Ascending aorta (tissue), 2 donors: ENCODE measurements at regions of chr3 and their contacts with region 1.

Region 1: GRCh38 chr3:21894459-21895340 is 143.7 kb upstream of the ZNF385D start:
- DNase-seq: no peak
- H3K4me3 ChIP-seq: no peak overlapping the region
- H3K27ac ChIP-seq: no peak overlapping the region
- H3K4me1 ChIP-seq: peaks cover 0 to 3% of the 10 kb centered on the region in 2 donors
- H3K27me3 ChIP-seq: no peaks in the 10 kb centered on the region
- CTCF ChIP-seq: peak in 2 of 3 experiments; percentile 65 to 75

Region 2: DNA sequence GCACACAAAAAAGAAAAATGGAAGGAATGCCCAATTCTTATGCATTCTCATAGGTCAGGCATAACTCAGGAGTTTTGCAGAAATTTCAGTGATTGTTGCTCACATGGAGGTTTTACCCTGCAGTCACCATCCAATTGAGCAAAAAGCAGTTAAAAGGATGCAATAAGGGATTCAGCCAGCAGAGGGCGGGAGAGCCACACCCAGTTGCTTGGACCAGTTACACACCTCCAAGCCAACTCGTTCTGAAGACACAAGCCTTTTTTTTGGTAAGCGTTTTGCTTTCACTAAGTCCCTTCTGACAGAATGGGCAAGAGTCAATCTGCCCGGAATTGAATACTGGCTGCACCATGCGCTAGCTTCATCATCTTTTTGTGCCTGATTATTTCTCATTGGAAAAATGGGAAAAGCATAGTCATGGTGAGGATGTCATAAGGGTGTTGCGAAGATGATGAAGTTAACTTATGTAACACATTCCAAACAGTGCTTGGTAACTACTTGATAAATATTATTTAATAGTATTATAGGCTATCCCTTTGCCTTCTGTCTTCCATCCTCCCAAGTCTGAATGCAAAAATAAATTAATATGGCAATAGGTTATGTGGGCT is 1554.3 kb before region 1 on chr3:
- intact Hi-C with region 1: loop called (anchors 10 kb)
- DNase-seq: peak; percentile 9 to 79
- H3K4me3 ChIP-seq: peak overlapping the region in 1 of 2 donors; percentile 12
- H3K27ac ChIP-seq: no peak overlapping the region
- H3K4me1 ChIP-seq: no peaks in the 10 kb centered on the region
- H3K27me3 ChIP-seq: no peaks in the 10 kb centered on the region
- CTCF ChIP-seq: peak; percentile 58 to 93 (median 89)

Region 3: GRCh38 chr3:20511863-20512505 is 1382.7 kb before region 1 on chr3:
- intact Hi-C with region 1: loop called (anchors 5 kb)
- DNase-seq: no peak
- H3K4me3 ChIP-seq: no peak overlapping the region
- H3K27ac ChIP-seq: no peak overlapping the region
- H3K4me1 ChIP-seq: no peaks in the 10 kb centered on the region
- H3K27me3 ChIP-seq: no peaks in the 10 kb centered on the region
- CTCF ChIP-seq: peak; percentile 40 to 64 (median 50)

Region 4: GRCh38 chr3:21294768-21295167 is 599.9 kb before region 1 on chr3:
- intact Hi-C with region 1: no loop called
- DNase-seq: no peak
- H3K4me3 ChIP-seq: no peak overlapping the region
- H3K27ac ChIP-seq: no peak overlapping the region
- H3K4me1 ChIP-seq: no peaks in the 10 kb centered on the region
- H3K27me3 ChIP-seq: no peaks in the 10 kb centered on the region
- CTCF ChIP-seq: no peak

Region 5: DNA sequence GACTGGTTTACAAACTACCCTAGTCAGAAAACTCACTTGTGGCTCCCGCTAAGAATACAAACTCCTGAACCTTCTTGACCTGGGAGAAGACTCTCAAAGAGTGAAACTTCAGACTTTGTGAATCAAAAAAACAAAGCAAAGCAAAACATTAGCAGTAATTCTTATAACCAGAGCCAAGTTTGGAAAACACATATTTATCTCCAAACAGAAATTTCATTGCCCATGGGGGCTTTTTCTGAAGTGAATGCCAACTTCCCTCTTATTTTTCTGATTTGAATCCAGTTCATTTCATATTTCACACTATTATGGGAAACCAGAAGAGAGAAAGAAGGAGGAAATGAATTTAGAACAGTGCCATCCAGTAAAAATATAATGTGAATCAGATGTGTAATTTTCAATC is 88.0 kb before region 1 on chr3:
- intact Hi-C with region 1: no loop called
- DNase-seq: no peak
- H3K4me3 ChIP-seq: no peak overlapping the region
- H3K27ac ChIP-seq: no peak overlapping the region
- H3K4me1 ChIP-seq: peaks cover 0 to 3% of the 10 kb centered on the region in 2 donors
- H3K27me3 ChIP-seq: no peaks in the 10 kb centered on the region
- CTCF ChIP-seq: no peak